ENCODE measurements at regions of chr5 and their contacts with region 1.

Region 1: GRCh38 chr5:119411935-119412602 is 40.2 kb upstream of the HSD17B4 start:
- DNase-seq: peak in 1 of 2 donors; percentile 76
- H3K4me3 ChIP-seq: peak overlapping the region; percentile 50 to 67
- H3K27ac ChIP-seq: peak overlapping the region; percentile 72 to 83
- H3K4me1 ChIP-seq: no peaks in the 10 kb centered on the region
- H3K27me3 ChIP-seq: no peaks in the 10 kb centered on the region
- CTCF ChIP-seq: peak; percentile 82 to 91 (median 86)

Region 2: DNA sequence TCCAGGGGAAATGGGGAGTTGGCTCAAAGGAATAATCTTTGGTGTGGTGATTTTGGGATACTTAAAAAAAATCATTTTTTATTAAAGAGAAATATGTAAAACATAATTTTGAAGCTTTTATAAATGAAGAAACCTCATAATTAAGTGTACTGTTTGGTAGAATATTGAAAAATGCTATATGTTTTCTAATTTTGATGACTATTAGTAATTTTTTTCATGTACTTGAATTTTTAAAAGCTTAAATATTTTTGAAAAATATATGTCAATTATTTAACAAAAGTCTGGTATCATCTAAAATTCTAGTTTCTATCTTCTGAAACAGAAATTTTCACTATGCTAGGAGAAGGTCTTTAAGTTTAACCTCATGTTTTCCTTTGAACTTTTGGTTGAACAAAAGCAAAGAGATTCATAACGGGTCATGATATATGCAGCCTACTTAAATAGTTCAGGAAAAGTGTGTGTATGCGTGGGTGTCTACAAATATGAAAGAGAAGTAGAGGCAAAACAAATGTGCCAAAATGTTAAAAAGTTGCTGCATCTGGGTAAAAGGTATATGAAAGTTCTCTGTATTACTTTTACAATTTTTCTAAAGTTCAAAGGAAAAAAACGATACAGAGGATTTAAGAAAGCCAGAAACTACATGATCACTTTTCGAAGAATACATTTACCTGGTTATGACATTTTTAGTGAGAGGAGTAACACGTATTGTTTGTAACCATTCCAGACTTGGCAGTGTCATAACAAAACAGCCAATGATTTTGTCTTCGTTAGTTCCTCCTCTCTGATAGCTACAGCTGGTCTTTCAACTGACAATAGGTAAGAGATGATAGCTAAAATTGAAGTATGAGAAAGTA is 173.6 kb before region 1 on chr5:
- intact Hi-C with region 1: loop called (anchors 5 kb)
- DNase-seq: no peak
- H3K4me3 ChIP-seq: no peak overlapping the region
- H3K27ac ChIP-seq: no peak overlapping the region
- H3K4me1 ChIP-seq: no peaks in the 10 kb centered on the region
- H3K27me3 ChIP-seq: no peaks in the 10 kb centered on the region
- CTCF ChIP-seq: no peak

Region 3: GRCh38 chr5:119336845-119337580 is 75.1 kb before region 1 on chr5:
- intact Hi-C with region 1: loop called (anchors 1 kb)
- DNase-seq: no peak
- H3K4me3 ChIP-seq: no peak overlapping the region
- H3K27ac ChIP-seq: no peak overlapping the region
- H3K4me1 ChIP-seq: peaks cover 0 to 2% of the 10 kb centered on the region in 2 donors
- H3K27me3 ChIP-seq: no peaks in the 10 kb centered on the region
- CTCF ChIP-seq: no peak

Measured in ascending aorta (tissue), 2 donors.